CD4-positive, alpha-beta memory T cell (primary cell): ENCODE measurements at regions of chr6 and their contacts with region 1.

Region 1: DNA sequence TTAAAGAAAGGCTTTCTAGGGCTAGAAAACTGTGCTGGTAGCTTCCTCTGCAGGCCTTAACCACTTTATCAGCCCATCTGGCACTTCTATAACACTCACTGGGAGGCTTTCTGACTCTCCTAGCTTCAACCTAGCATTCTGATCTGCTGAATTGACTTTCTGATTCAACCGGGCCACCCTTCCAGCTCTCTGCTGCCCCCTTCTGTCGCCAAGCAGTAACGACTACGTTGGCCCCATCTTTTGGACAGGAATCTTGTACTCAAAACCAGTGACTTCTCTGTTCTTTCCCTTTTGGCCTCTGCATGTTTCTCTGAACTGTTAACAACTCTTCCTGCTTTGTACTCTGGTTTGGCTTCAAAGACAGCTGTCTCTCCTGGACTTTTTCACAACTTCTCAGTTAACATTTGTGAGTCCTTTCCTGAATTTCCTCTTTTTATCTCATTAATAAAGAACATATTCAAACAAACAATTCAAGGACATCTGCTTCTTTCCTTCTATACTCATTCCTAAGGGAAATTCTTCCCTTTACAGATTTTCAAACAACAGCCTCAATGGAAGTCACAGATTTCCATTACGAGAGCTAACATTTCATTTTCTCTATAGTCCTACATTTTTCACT is 43.9 kb upstream of the FAM135A start:
- DNase-seq: peak; percentile 53 to 62 (median 58)
- H3K4me3 ChIP-seq: no peak overlapping the region
- H3K4me3 Mint-ChIP-seq: no peak overlapping the region
- H3K27ac ChIP-seq: no peak overlapping the region
- H3K27ac Mint-ChIP-seq: no peak overlapping the region
- H3K4me1 ChIP-seq: no peaks in the 10 kb centered on the region
- H3K4me1 Mint-ChIP-seq: no peaks in the 10 kb centered on the region
- H3K27me3 ChIP-seq: no peaks in the 10 kb centered on the region
- H3K27me3 Mint-ChIP-seq: peaks cover 6 to 16% of the 10 kb centered on the region in 2 donors

Region 2: DNA sequence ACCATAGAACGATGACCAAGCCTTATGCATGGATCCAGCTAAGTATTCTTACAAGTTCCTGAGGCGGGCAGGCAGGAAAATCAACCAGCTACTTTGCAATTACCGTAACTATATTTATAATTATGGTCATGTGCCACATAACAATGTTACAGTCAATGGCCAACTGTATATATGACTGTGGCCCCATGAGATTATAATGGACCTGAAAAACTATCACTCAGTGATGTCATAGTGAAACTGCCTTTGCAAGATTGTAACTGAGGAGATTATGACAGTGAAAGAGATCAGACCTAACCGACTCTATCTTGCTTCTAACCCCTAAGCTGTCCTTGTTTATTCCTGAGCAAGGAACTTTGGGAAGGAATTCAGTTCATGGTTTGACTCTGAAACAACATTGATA is 10.8 kb after region 1 on chr6:
- CTCF ChIA-PET with region 1: interaction called, 29 read pairs
- POLR2A ChIA-PET with region 1: no interaction called
- intact Hi-C with region 1: no loop called
- DNase-seq: no peak
- H3K4me3 ChIP-seq: no peak overlapping the region
- H3K4me3 Mint-ChIP-seq: no peak overlapping the region
- H3K27ac ChIP-seq: no peak overlapping the region
- H3K27ac Mint-ChIP-seq: no peak overlapping the region
- H3K4me1 ChIP-seq: no peaks in the 10 kb centered on the region
- H3K4me1 Mint-ChIP-seq: no peaks in the 10 kb centered on the region
- H3K27me3 ChIP-seq: peaks cover 7% of the 10 kb centered on the region
- H3K27me3 Mint-ChIP-seq: peaks cover 6 to 9% of the 10 kb centered on the region in 2 donors

Region 3: GRCh38 chr6:70413114-70413991 is 43.9 kb after region 1 on chr6 and contains the start of gene FAM135A:
- CTCF ChIA-PET with region 1: interaction called, 5 read pairs
- POLR2A ChIA-PET with region 1: interaction called, 3 read pairs
- intact Hi-C with region 1: loop called (anchors 5 kb)
- DNase-seq: peak; percentile 90 to 96 (median 93)
- H3K4me3 ChIP-seq: peak within 1 kb of the TSS; percentile 59 to 62
- H3K4me3 Mint-ChIP-seq: peak within 1 kb of the TSS; percentile 93 to 97 (median 95)
- H3K27ac ChIP-seq: peak within 1 kb of the TSS; percentile 56
- H3K27ac Mint-ChIP-seq: peak within 1 kb of the TSS; percentile 90 to 96 (median 92)
- H3K4me1 ChIP-seq: peaks cover 17% of the 10 kb centered on the region
- H3K4me1 Mint-ChIP-seq: peaks cover 13 to 26% (median 20%) of the 10 kb centered on the region in 4 donors
- H3K27me3 ChIP-seq: no peaks in the 10 kb centered on the region
- H3K27me3 Mint-ChIP-seq: peaks cover 0 to 2% of the 10 kb centered on the region in 2 donors
- total RNA-seq, gene FAM135A: 11.3 to 14.5 TPM

Region 4: GRCh38 chr6:70520575-70520974 is 151.1 kb after region 1 on chr6:
- CTCF ChIA-PET with region 1: no interaction called
- POLR2A ChIA-PET with region 1: no interaction called
- intact Hi-C with region 1: no loop called
- DNase-seq: peak; percentile 12 to 41 (median 28)
- H3K4me3 ChIP-seq: no peak overlapping the region
- H3K4me3 Mint-ChIP-seq: no peak overlapping the region
- H3K27ac ChIP-seq: no peak overlapping the region
- H3K27ac Mint-ChIP-seq: no peak overlapping the region
- H3K4me1 ChIP-seq: no peaks in the 10 kb centered on the region
- H3K4me1 Mint-ChIP-seq: peaks cover 0 to 7% (median 6%) of the 10 kb centered on the region in 4 donors
- H3K27me3 ChIP-seq: no peaks in the 10 kb centered on the region
- H3K27me3 Mint-ChIP-seq: no peaks in the 10 kb centered on the region